ENCODE measurements at regions of chr21 and their contacts with region 1.

Region 1: GRCh38 chr21:33441489-33442477 is 38.0 kb downstream of the TMEM50B start:
- DNase-seq: peak; percentile 47
- H3K4me3 ChIP-seq: no peak overlapping the region
- H3K27ac ChIP-seq: peak overlapping the region; percentile 70
- H3K4me1 ChIP-seq: peaks cover 36% of the 10 kb centered on the region
- H3K27me3 ChIP-seq: no peaks in the 10 kb centered on the region
- CTCF ChIP-seq: no peak

Region 2: GRCh38 chr21:32834916-32835235 is 606.9 kb before region 1 on chr21:
- intact Hi-C with region 1: loop called (anchors 10 kb)
- DNase-seq: no peak
- H3K4me3 ChIP-seq: no peak overlapping the region
- H3K27ac ChIP-seq: no peak overlapping the region
- H3K4me1 ChIP-seq: no peaks in the 10 kb centered on the region
- H3K27me3 ChIP-seq: peaks cover 3% of the 10 kb centered on the region
- CTCF ChIP-seq: no peak

Region 3: DNA sequence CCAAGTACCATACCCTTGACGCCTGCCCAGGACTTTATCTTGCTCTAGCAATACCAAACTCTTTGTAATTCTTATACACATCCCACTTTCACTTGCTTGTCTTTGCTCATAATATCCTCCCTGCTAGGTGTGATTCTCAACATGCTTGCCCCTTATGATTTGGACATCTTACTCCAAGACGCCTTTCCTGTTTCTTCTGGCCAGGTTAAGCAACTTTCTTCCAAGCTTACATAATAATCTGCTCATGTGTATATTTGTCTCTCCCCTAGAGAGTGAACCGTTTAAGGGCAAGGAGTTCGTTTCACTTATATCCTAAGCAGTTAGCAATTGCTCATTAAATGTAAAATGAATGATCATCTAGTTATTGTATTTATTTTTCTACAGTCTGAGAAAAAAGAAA is 177.9 kb after region 1 on chr21:
- intact Hi-C with region 1: no loop called
- DNase-seq: no peak
- H3K4me3 ChIP-seq: no peak overlapping the region
- H3K27ac ChIP-seq: no peak overlapping the region
- H3K4me1 ChIP-seq: no peaks in the 10 kb centered on the region
- H3K27me3 ChIP-seq: no peaks in the 10 kb centered on the region
- CTCF ChIP-seq: no peak

Region 4: DNA sequence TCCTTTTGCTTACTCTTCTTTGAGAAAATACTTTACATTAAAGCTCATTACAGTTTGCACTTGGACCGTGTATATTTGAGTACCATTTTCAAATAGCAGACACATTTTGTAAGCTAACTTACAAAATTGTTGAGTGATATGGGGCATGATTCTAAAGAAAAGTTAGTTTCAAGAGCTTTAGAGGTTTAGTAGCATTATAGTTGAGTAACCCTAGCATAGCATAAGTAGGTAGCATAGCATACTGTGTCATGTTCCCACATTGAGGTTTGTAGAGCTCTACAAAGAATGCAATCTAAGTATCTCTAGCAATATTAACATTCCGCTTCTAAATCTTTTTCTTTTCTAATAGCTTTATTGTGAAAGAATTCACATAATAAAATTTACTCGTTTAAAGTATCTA is 292.5 kb after region 1 on chr21:
- intact Hi-C with region 1: no loop called
- DNase-seq: no peak
- H3K4me3 ChIP-seq: no peak overlapping the region
- H3K27ac ChIP-seq: no peak overlapping the region
- H3K4me1 ChIP-seq: peaks cover 12% of the 10 kb centered on the region
- H3K27me3 ChIP-seq: no peaks in the 10 kb centered on the region
- CTCF ChIP-seq: no peak